ENCODE measurements at regions of chr20 and their contacts with region 1.

Region 1: DNA sequence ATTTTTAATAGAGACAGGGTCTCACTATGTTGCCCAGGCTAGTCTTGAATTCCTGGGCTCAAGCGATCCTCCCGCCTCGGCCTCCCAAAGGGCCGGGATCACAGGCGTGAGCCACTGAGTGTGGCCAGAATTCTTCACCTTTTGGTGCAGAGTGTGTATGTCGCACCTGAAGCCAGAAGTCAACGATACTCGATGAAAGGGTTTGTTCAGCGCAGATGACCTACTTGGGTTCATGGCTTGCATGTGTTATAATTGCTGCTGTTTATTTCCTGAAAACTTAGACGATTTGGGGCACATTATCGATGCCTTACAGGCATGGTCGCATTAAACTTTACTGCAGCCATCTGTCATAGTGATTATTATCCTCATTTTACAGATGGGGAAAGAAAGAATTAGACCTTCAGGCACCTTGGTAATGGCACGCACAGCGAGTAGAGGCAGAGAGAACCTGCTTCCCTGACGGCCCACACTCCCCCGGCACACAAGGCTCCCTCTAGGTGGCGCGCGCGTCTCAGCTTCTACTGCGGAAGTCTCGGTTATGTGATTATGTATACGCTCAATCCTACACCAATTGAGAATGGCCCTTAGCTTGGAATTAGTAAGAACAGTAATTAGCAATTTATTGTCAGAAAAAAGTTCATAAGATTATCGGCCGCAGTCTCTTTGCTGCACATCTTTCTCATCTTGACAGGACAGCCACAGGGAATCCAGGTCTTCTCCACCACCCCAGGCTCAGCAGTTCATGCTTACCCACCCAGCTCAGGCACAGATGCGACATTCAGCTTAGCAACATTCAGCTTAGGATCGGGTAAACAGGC is 212.8 kb upstream of the PROKR2 start:
- DNase-seq: peak; percentile 96
- H3K4me3 ChIP-seq: no peak overlapping the region
- H3K27ac ChIP-seq: peak overlapping the region in 2 of 8 donors; percentile 5
- H3K4me1 ChIP-seq: peaks cover 7 to 40% (median 19%) of the 10 kb centered on the region in 6 donors
- H3K27me3 ChIP-seq: no peaks in the 10 kb centered on the region
- CTCF ChIP-seq: peak; percentile 42 to 82 (median 70)
- POLR2A ChIP-seq: no peak

Region 2: GRCh38 chr20:5933802-5934436 is 404.4 kb after region 1 on chr20:
- intact Hi-C with region 1: loop called (anchors 10 kb)
- DNase-seq: no peak
- H3K4me3 ChIP-seq: no peak overlapping the region
- H3K27ac ChIP-seq: no peak overlapping the region
- H3K4me1 ChIP-seq: peaks cover 0 to 10% (median 0%) of the 10 kb centered on the region in 6 donors
- H3K27me3 ChIP-seq: peaks cover 0 to 4% (median 0%) of the 10 kb centered on the region in 7 donors
- CTCF ChIP-seq: peak in 7 of 11 experiments; percentile 12 to 43 (median 33)
- POLR2A ChIP-seq: no peak

Region 3: GRCh38 chr20:6075428-6076219 is 546.1 kb after region 1 on chr20:
- intact Hi-C with region 1: loop called (anchors 5 kb)
- DNase-seq: no peak
- H3K4me3 ChIP-seq: no peak overlapping the region
- H3K27ac ChIP-seq: no peak overlapping the region
- H3K4me1 ChIP-seq: no peaks in the 10 kb centered on the region
- H3K27me3 ChIP-seq: no peaks in the 10 kb centered on the region
- CTCF ChIP-seq: no peak
- POLR2A ChIP-seq: no peak